Left ventricle myocardium inferior (tissue), 1 donor: ENCODE measurements at regions of chr3 and their contacts with region 1.

Region 1: DNA sequence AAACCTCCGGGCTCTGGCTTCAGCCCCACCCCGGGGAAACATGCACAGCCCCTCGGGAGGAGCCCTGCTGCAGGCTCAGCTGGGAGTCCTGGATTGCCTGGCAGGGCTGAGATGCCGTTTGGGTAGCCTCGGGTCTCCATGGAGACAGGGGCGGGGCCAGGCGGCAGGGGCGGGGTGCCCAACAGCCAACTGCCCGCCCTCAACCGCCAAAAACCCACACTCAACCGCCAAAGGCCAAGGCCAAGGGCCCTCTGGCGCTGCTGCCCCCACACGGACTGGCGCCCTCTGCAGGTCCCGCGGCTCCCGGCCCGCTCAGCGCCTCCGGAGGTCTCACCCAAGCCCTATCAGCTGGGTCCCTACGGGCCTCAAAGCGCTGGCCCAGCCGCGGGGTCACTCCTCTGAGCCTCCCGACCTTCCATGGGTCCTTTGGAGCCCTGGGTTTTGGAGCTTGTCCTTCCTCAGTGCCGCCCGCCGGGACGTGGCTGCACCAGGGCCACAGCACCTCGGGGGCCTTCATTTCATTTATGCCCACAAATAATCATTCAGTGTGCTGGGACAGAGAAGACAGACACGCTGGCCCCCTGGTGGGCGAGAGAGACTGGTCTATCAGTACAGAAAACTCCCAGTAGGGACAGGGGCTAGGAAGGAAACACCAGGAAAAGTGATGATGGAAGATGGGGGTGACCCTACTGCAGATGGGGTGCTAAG is 33.5 kb upstream of the ACAD9 start:
- DNase-seq: peak; percentile 92
- H3K4me3 ChIP-seq: peak overlapping the region; percentile 69
- H3K27ac ChIP-seq: peak overlapping the region; percentile 91
- H3K4me1 ChIP-seq: peaks cover 18% of the 10 kb centered on the region
- H3K27me3 ChIP-seq: no peaks in the 10 kb centered on the region
- CTCF ChIP-seq: peak; percentile 73

Region 2: DNA sequence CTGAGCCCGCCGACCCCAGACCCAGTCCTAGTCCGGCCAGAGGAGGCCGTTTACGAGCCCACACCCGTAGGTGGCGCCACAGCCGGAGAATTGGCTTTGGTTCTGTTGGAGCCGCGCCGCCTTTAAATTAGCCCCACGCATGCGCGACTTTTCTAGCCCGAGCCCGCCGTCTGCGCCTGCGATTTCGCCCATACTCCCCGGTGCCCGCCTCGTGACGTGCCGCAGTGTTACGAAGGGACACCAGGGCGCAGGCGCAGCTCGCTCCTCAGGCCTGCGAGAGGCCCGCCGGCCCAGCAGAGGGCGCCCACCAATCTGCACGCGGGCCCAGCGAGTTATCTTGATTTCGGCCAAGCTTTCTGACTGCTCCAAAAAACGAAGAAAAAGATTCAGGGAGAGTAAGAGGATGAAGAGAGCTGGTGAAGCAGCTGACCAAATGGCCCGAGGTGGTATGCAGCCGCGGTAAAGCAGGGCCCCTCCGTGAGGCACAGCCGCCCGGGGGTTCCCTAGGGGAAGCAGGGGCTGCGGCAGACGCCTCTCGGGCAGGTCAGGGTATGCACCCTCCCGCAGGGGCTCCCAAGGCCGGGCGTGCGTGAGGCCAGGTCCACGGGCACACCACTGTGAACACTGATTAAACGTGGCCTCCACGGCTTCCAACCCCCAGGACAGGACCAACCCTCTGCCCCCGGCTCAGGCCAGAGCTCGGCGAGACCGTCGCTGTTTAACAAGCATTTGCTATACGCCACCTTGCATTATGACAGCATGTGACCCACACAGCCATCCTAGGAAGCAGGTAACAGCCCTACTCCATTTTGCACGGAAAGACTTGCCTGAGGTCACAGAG is 228.2 kb before region 1 on chr3:
- intact Hi-C with region 1: loop called (anchors 5 kb)
- DNase-seq: peak; percentile 98
- H3K4me3 ChIP-seq: peak overlapping the region; percentile 88
- H3K27ac ChIP-seq: peak overlapping the region; percentile 91
- H3K4me1 ChIP-seq: peaks cover 33% of the 10 kb centered on the region
- H3K27me3 ChIP-seq: no peaks in the 10 kb centered on the region
- CTCF ChIP-seq: peak; percentile 97